ENCODE measurements at regions of chr13 and their contacts with region 1.

Region 1: GRCh38 chr13:45367358-45367757 is 26.4 kb upstream of the TPT1 start:
- DNase-seq: peak; percentile 93 to 98 (median 97)
- H3K4me3 ChIP-seq: no peak overlapping the region
- H3K27ac ChIP-seq: no peak overlapping the region
- H3K4me1 ChIP-seq: peaks cover 0 to 36% (median 29%) of the 10 kb centered on the region in 4 experiments
- H3K27me3 ChIP-seq: no peaks in the 10 kb centered on the region

Region 2: GRCh38 chr13:45356966-45357672 is 10.2 kb before region 1 on chr13:
- CTCF ChIA-PET with region 1: interaction called, 32 read pairs
- POLR2A ChIA-PET with region 1: interaction called, 3 read pairs
- DNase-seq: peak; percentile 67 to 98 (median 97)
- H3K4me3 ChIP-seq: no peak overlapping the region
- H3K27ac ChIP-seq: no peak overlapping the region
- H3K4me1 ChIP-seq: peaks cover 0 to 19% (median 16%) of the 10 kb centered on the region in 4 experiments
- H3K27me3 ChIP-seq: no peaks in the 10 kb centered on the region

Region 3: GRCh38 chr13:45385907-45386553 is 18.7 kb after region 1 on chr13:
- CTCF ChIA-PET with region 1: interaction called, 191 read pairs
- POLR2A ChIA-PET with region 1: interaction called, 3 read pairs
- DNase-seq: peak in 2 of 3 donors; percentile 27 to 37
- H3K4me3 ChIP-seq: no peak overlapping the region
- H3K27ac ChIP-seq: no peak overlapping the region
- H3K4me1 ChIP-seq: peaks cover 0 to 32% (median 25%) of the 10 kb centered on the region in 4 experiments
- H3K27me3 ChIP-seq: no peaks in the 10 kb centered on the region

Region 4: DNA sequence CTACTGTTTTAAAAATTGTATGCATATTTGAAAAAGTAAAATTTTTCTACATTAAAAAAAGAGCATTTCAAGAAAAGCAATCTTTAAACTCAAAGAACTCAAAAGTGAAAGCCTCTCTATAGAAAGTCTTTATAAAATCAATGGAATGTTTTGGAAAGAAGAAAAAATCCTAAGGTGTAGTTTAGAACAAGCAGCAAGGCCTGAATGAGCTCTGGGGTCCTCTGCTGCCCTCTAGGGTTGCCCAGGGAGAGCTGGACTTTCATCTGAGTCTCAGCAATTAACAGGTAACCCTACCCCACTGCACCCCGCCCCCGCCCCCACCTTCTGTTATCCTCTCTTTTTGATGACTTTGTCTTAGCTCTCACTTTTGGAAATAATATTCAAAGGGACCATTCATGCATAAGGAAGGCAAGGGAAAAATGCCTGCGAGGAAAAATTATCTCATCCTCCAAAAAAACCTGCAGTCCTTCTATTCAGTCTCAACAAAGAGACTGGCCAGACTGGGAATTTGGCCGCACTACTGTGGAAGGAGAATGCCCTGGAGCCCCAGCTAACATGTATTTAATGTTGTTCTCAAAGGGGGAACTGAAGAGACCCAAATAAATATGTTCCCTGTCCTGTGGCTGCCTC is 26.7 kb after region 1 on chr13:
- CTCF ChIA-PET with region 1: interaction called, 191 read pairs
- POLR2A ChIA-PET with region 1: interaction called, 4 read pairs
- DNase-seq: peak; percentile 68 to 76 (median 71)
- H3K4me3 ChIP-seq: peak overlapping the region in 2 of 7 experiments; percentile 26 to 44
- H3K27ac ChIP-seq: no peak overlapping the region
- H3K4me1 ChIP-seq: peaks cover 25 to 61% (median 49%) of the 10 kb centered on the region in 4 experiments
- H3K27me3 ChIP-seq: no peaks in the 10 kb centered on the region

Region 5: DNA sequence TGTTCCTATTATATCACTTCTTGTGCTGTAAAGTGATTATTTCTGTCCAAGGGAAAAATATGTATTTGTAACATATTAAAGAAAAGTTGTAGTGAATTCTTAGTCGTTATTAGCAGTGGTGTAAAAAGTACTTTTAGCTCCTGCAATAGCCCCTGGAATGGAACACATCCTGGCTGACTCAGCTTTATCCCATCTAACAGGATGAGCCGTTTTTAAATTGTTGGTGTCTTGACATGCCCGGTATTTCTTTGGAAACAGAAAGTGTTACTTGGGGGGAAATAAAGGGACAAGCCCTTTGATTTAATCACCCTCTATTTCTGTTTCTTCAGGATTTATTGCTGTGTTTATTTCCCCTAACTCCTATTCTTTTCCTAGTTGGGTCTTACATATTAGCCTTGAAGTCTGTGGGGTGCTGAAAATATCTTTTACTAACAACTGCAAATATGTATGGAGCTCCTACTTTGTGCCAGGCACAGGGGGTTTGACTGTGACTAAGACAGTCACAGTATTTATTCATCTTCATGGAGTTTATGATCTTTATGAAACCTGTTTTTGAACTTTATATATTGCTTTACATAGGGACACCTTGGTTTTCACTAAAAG is 115.3 kb after region 1 on chr13:
- CTCF ChIA-PET with region 1: interaction called, 84 read pairs
- POLR2A ChIA-PET with region 1: no interaction called
- DNase-seq: no peak
- H3K4me3 ChIP-seq: peak overlapping the region in 2 of 7 experiments; percentile 4 to 16
- H3K27ac ChIP-seq: peak overlapping the region; percentile 9 to 49
- H3K4me1 ChIP-seq: peaks cover 0 to 9% (median 0%) of the 10 kb centered on the region in 4 experiments
- H3K27me3 ChIP-seq: no peaks in the 10 kb centered on the region

Region 6: DNA sequence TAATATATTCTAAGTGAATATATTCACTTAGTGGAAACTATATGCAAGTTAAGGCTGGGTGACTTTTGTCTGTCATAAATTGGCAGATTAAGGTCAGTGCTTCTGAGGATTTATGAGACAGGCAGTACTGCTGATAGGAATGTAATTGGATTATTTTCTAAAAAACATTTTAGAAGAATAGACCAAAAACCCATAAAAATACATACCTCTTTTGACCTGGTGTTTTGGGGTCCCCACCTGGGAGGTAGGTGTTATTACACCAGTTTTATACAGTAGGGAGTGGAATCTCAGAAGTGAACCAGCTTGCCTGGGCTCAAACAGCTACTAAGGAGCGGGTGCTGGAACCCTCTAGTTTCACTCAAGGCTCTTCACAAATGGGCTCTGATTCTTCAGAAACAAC is 122.7 kb after region 1 on chr13:
- CTCF ChIA-PET with region 1: interaction called, 84 read pairs
- POLR2A ChIA-PET with region 1: no interaction called
- DNase-seq: peak; percentile 52 to 75 (median 72)
- H3K4me3 ChIP-seq: no peak overlapping the region
- H3K27ac ChIP-seq: peak overlapping the region in 1 of 2 experiments; percentile 44
- H3K4me1 ChIP-seq: no peaks in the 10 kb centered on the region
- H3K27me3 ChIP-seq: no peaks in the 10 kb centered on the region

Region 7: GRCh38 chr13:45496942-45497341 is 129.6 kb after region 1 on chr13:
- CTCF ChIA-PET with region 1: interaction called, 84 read pairs
- POLR2A ChIA-PET with region 1: no interaction called
- DNase-seq: no peak
- H3K4me3 ChIP-seq: no peak overlapping the region
- H3K27ac ChIP-seq: no peak overlapping the region
- H3K4me1 ChIP-seq: peaks cover 7 to 18% (median 13%) of the 10 kb centered on the region in 4 experiments
- H3K27me3 ChIP-seq: no peaks in the 10 kb centered on the region

Region 8: DNA sequence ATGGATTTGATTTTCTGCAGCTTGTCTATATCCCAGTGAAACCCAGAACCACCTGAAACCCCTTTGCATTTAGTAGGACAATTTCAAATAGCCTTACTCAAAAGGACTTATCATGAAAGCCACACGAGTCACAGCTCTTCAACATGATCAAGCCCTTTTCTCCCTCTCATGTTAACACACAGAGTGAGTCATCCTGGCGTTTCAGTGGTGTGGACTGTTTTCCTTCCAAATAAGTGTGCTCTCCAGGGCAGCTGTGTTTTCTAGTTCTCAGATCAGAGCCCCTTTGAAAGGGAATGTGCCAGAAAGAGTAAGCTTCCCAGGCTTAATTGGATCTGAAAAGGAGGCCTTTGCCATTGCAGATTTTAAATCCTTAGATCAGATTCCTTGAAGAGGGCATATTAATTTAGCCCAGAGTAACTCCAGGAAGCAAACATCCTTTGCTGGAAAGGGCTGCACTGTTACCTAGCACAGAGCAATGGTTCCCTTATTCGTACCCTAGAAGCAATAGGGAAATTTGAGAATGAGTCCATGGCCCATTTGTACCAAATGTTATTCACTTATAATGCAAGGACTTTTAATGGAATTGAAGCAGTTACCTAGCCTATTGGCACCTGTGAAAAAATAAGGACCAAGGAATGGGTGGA is 196.9 kb after region 1 on chr13:
- CTCF ChIA-PET with region 1: no interaction called
- POLR2A ChIA-PET with region 1: no interaction called
- DNase-seq: peak in 2 of 3 donors; percentile 10 to 23
- H3K4me3 ChIP-seq: no peak overlapping the region
- H3K27ac ChIP-seq: no peak overlapping the region
- H3K4me1 ChIP-seq: no peaks in the 10 kb centered on the region
- H3K27me3 ChIP-seq: no peaks in the 10 kb centered on the region